ENCODE measurements at regions of chr11 and their contacts with region 1.

Region 1: GRCh38 chr11:114774599-114775361 is 96.5 kb downstream of the NXPE2 start:
- DNase-seq: peak; percentile 50 to 86
- H3K4me3 ChIP-seq: no peak overlapping the region
- H3K27ac ChIP-seq: no peak overlapping the region
- H3K4me1 ChIP-seq: peaks cover 4 to 14% (median 10%) of the 10 kb centered on the region in 4 experiments; a peak in 4 of 7 replicates
- H3K27me3 ChIP-seq: peaks cover 0 to 11% (median 5%) of the 10 kb centered on the region in 4 experiments; a peak in 5 of 7 replicates
- CTCF ChIP-seq: peak; percentile 83 to 96 (median 88)
- EP300 ChIP-seq: no peak
- POLR2A ChIP-seq: no peak
- RAD21 ChIP-seq: peak; percentile 98 to 99

Region 2: DNA sequence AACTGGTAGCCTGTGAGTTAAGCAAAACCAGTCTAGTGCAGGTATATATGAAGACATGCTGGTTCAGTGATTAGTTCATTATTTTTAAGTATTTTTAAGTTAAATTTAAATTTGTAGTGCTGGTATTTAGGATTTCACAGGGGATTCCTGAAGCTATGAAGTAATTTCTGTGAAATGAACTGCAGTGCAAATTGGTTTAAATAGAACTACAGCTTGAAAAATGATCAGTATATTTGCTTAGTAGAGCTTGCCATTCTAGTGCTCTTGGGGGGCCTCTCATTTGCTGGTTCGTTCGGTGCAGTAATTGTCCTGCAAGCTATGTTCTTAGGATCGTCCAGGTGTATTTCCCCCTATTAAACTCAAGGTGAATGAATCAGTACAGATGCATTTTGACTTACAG is 322.4 kb before region 1 on chr11:
- CTCF ChIA-PET with region 1: no interaction called
- POLR2A ChIA-PET with region 1: no interaction called
- DNase-seq: no peak
- H3K4me3 ChIP-seq: no peak overlapping the region
- H3K27ac ChIP-seq: no peak overlapping the region
- H3K4me1 ChIP-seq: no peaks in the 10 kb centered on the region; a peak in 1 of 7 replicates
- H3K27me3 ChIP-seq: no peaks in the 10 kb centered on the region
- CTCF ChIP-seq: no peak
- EP300 ChIP-seq: no peak
- POLR2A ChIP-seq: no peak
- RAD21 ChIP-seq: no peak

Region 3: GRCh38 chr11:114678125-114679036 is 96.4 kb before region 1 on chr11 and contains the start of gene NXPE2:
- CTCF ChIA-PET with region 1: no interaction called
- POLR2A ChIA-PET with region 1: no interaction called
- DNase-seq: no peak
- H3K4me3 ChIP-seq: no peak within 1 kb of the TSS
- H3K27ac ChIP-seq: no peak within 1 kb of the TSS
- H3K4me1 ChIP-seq: no peaks in the 10 kb centered on the region
- H3K27me3 ChIP-seq: no peaks in the 10 kb centered on the region
- CTCF ChIP-seq: no peak
- EP300 ChIP-seq: no peak
- POLR2A ChIP-seq: no peak
- RAD21 ChIP-seq: no peak
- total RNA-seq, gene NXPE2: 0.29 TPM in 1 of 2 replicates, not detected in the other

Region 4: DNA sequence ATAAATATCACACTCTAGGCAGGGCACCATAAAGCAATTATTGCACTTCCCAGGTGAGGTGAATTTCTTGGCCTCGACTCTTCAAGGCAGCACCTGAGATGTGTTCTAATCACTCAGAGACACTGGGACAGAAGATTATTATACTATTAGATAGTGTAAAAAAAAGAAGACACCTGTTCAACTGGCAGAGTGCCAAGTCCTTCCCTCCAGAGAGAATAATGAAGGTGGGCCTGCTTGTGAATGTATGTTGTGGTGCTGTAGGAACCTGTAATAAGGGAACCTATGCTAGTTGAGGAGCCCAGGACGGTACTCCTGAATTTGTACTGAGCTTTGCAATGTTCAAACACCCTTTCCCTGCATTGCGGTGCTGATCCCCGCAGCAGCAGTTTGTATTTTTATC is 11.0 kb after region 1 on chr11:
- CTCF ChIA-PET with region 1: interaction called, 30 read pairs
- POLR2A ChIA-PET with region 1: no interaction called
- DNase-seq: no peak
- H3K4me3 ChIP-seq: no peak overlapping the region
- H3K27ac ChIP-seq: no peak overlapping the region
- H3K4me1 ChIP-seq: peaks cover 0 to 2% (median 0%) of the 10 kb centered on the region in 4 experiments; a peak in 3 of 7 replicates
- H3K27me3 ChIP-seq: no peaks in the 10 kb centered on the region
- CTCF ChIP-seq: no peak
- EP300 ChIP-seq: no peak
- POLR2A ChIP-seq: no peak
- RAD21 ChIP-seq: no peak

Region 5: GRCh38 chr11:114794048-114794684 is 19.4 kb after region 1 on chr11:
- CTCF ChIA-PET with region 1: interaction called, 11 read pairs
- POLR2A ChIA-PET with region 1: no interaction called
- DNase-seq: no peak
- H3K4me3 ChIP-seq: no peak overlapping the region
- H3K27ac ChIP-seq: no peak overlapping the region
- H3K4me1 ChIP-seq: peaks cover 0 to 2% (median under 1%) of the 10 kb centered on the region in 4 experiments; a peak in 4 of 7 replicates
- H3K27me3 ChIP-seq: no peaks in the 10 kb centered on the region
- CTCF ChIP-seq: no peak
- EP300 ChIP-seq: no peak
- POLR2A ChIP-seq: no peak
- RAD21 ChIP-seq: no peak

Region 6: GRCh38 chr11:114909866-114910265 is 135.1 kb after region 1 on chr11:
- CTCF ChIA-PET with region 1: interaction called, 15 read pairs
- POLR2A ChIA-PET with region 1: no interaction called
- DNase-seq: peak; percentile 5 to 53
- H3K4me3 ChIP-seq: no peak overlapping the region
- H3K27ac ChIP-seq: no peak overlapping the region
- H3K4me1 ChIP-seq: no peaks in the 10 kb centered on the region; a peak in 1 of 7 replicates
- H3K27me3 ChIP-seq: no peaks in the 10 kb centered on the region
- CTCF ChIP-seq: peak; percentile 23 to 65 (median 52)
- EP300 ChIP-seq: no peak
- POLR2A ChIP-seq: no peak
- RAD21 ChIP-seq: peak; percentile 47 to 65

Region 7: DNA sequence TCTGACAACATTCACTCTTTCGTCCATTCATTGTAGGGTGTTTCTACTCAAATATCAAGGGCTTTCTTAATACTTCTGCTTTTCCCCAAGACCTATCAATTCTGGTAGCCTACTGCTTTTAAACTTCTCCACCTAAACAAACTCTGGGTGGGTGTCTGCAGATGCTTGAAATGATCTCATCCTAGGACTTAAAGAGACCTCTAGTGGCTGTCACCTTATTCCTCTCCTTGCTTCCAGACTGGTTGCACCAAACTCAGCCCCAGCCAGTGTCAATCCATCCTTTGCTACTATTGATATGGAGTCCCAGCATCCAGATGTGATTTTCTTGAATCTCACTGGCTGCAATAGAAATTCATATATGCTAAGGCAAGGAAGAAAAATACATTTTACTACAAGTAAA is 178.3 kb after region 1 on chr11:
- CTCF ChIA-PET with region 1: interaction called, 19 read pairs
- POLR2A ChIA-PET with region 1: no interaction called
- DNase-seq: no peak
- H3K4me3 ChIP-seq: no peak overlapping the region
- H3K27ac ChIP-seq: no peak overlapping the region
- H3K4me1 ChIP-seq: no peaks in the 10 kb centered on the region
- H3K27me3 ChIP-seq: no peaks in the 10 kb centered on the region
- CTCF ChIP-seq: peak in 2 of 3 experiments; percentile 53 to 65; a peak in 3 of 4 replicates
- EP300 ChIP-seq: no peak
- POLR2A ChIP-seq: no peak
- RAD21 ChIP-seq: peak; percentile 71 to 82

Region 8: DNA sequence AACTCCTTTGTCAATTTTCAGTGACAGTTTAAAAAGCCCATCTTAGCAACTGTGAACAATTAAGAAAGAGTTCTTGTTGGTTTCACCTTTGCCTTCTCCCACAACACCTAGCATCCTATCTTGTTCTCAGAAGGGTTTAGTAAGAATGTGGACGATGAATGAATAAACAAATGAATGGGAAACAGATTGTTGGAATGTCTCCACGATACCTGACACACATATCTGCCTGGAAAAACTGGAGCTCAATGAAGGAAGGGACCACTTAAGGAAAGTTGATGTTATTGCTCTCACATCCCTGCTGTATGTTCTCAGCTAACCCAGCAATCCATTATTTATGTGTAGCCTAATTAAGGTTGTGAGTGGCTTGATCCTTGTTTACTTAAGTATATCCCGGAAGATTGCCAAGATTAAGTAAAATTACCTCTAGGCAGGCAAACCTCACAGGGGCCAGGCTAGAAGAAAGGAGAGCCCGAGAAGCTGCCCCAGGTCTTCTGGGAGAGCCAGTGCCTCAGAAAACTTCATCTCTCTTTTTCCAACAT is 190.0 kb after region 1 on chr11:
- CTCF ChIA-PET with region 1: interaction called, 11 read pairs
- POLR2A ChIA-PET with region 1: no interaction called
- DNase-seq: no peak
- H3K4me3 ChIP-seq: no peak overlapping the region
- H3K27ac ChIP-seq: no peak overlapping the region
- H3K4me1 ChIP-seq: no peaks in the 10 kb centered on the region; a peak in 1 of 7 replicates
- H3K27me3 ChIP-seq: peaks cover 0 to 1% (median 0%) of the 10 kb centered on the region in 4 experiments; a peak in 1 of 7 replicates
- CTCF ChIP-seq: no peak
- EP300 ChIP-seq: no peak
- POLR2A ChIP-seq: no peak
- RAD21 ChIP-seq: no peak

Measured in H1 (cell line).